K562 (cell line): ENCODE measurements at regions of chr11 and their contacts with region 1.

Region 1: DNA sequence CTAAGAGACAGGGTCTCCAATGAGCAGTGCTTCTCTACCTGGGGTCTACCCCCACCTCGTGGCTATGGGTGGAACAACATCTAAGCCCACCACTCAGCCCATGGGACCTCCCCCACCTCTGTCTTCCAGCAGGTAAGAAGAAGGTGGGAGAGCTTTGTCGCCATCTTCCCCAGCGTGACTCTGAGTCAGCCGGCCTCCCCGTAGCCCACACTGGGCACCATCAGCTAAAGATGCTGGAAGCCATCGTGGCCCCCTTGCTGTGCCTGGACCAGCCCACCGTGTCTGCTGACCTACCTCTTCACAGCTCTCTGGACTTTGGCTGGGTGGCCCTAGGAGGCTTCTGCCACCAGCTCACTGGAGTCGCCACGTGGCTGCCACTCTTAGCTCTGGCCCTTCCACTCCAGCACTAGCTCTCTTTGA is 954 bp downstream of the C11orf86 start:
- DNase-seq: peak; percentile 54 to 79 (median 68)
- ATAC-seq: peak; percentile 85
- H3K4me3 ChIP-seq: no peak overlapping the region
- H3K27ac ChIP-seq: no peak overlapping the region
- H3K4me1 ChIP-seq: peaks cover 0 to 14% of the 10 kb centered on the region in 2 experiments; a peak in 2 of 5 replicates
- H3K27me3 ChIP-seq: no peaks in the 10 kb centered on the region
- CTCF ChIP-seq: peak; percentile 73 to 94 (median 78)
- EP300 ChIP-seq: no peak
- POLR2A ChIP-seq: no peak
- RAD21 ChIP-seq: peak; percentile 81 to 91

Region 2: GRCh38 chr11:66694732-66695207 is 281.3 kb before region 1 on chr11:
- CTCF ChIA-PET with region 1: interaction called, 11 read pairs
- POLR2A ChIA-PET with region 1: no interaction called
- in situ Hi-C with region 1: loop called (anchors 5 kb)
- intact Hi-C with region 1: loop called (anchors 2 kb)
- DNase-seq: peak; percentile 84 to 95 (median 87)
- ATAC-seq: peak; percentile 99
- H3K4me3 ChIP-seq: no peak overlapping the region
- H3K27ac ChIP-seq: no peak overlapping the region; the same call in 2 of the 3 replicates
- H3K4me1 ChIP-seq: peaks cover 0 to 23% of the 10 kb centered on the region in 2 experiments; a peak in 2 of 5 replicates
- H3K27me3 ChIP-seq: no peaks in the 10 kb centered on the region
- CTCF ChIP-seq: peak; percentile 98 to 99 (median 98)
- EP300 ChIP-seq: no peak
- POLR2A ChIP-seq: no peak
- RAD21 ChIP-seq: peak; percentile 98 to 99

Region 3: DNA sequence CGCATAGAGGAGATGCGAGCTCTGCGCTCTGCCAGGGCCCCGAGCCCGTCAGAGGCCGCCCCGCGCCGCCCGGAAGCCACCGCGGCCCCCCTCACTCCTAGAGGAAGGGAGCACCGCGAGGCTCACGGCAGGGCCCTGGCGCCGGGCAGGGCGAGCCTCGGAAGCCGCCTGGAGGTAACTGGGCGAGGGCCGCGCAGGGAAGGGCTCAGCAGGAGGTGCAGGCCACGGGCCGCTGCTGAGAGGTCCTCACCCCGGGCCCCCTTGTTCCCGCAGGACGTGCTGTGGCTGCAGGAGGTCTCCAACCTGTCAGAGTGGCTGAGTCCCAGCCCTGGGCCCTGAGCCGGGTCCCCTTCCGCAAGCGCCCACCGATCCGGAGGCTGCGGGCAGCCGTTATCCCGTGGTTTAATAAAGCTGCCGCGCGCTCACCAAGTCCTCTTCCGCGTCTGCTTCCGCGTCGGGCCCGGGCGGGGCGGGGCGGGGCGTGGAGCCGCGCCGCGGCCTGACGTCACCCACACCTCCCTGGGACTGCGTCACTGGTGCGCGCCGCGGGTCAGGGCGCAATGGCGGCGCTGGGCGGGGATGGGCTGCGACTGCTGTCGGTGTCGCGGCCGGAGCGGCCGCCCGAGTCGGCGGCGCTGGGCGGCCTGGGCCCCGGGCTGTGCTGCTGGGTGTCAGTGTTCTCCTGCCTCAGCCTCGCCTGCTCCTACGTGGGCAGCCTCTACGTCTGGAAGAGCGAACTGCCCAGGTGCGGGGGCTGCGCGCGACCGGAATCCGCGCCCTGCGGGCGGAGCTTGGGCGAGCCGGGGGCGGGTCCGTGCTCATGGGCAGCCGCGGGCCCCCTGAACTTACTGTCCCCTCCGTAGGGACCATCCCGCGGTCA is 132.9 kb before region 1 on chr11 and contains the start of gene RCE1:
- CTCF ChIA-PET with region 1: no interaction called
- POLR2A ChIA-PET with region 1: no interaction called
- in situ Hi-C with region 1: no loop called
- intact Hi-C with region 1: loop called (anchors 5 kb)
- DNase-seq: peak; percentile 93 to 95 (median 94)
- ATAC-seq: peak; percentile 81
- H3K4me3 ChIP-seq: peak within 1 kb of the TSS; percentile 99
- H3K27ac ChIP-seq: peak within 1 kb of the TSS; percentile 98
- H3K4me1 ChIP-seq: peaks cover 44 to 56% of the 10 kb centered on the region in 2 experiments
- H3K27me3 ChIP-seq: no peaks in the 10 kb centered on the region
- CTCF ChIP-seq: 0 out of 6 replicates have a peak, but pooled peaks of 1 of the 3 experiments have one; percentile 0
- EP300 ChIP-seq: no peak; the same call in 1 of the 2 replicates
- POLR2A ChIP-seq: peak; percentile 91
- RAD21 ChIP-seq: no peak; a peak in 1 of 4 replicates
- polyA plus RNA-seq, gene RCE1: 0.75 to 3.0 TPM

Region 4: GRCh38 chr11:66855574-66856495 is 120.2 kb before region 1 on chr11:
- CTCF ChIA-PET with region 1: no interaction called
- POLR2A ChIA-PET with region 1: interaction called, 3 read pairs
- in situ Hi-C with region 1: loop called (anchors 5 kb)
- intact Hi-C with region 1: no loop called
- DNase-seq: peak; percentile 97 to 98 (median 98)
- ATAC-seq: peak; percentile 95
- H3K4me3 ChIP-seq: peak overlapping the region; percentile 68
- H3K27ac ChIP-seq: peak overlapping the region; percentile 98
- H3K4me1 ChIP-seq: peaks cover 11 to 95% of the 10 kb centered on the region in 2 experiments; a peak in 4 of 5 replicates
- H3K27me3 ChIP-seq: no peaks in the 10 kb centered on the region
- CTCF ChIP-seq: 0 out of 6 replicates have a peak, but pooled peaks of 1 of the 3 experiments have one; percentile 3
- EP300 ChIP-seq: peak; percentile 48
- POLR2A ChIP-seq: peak; percentile 95
- RAD21 ChIP-seq: no peak

Region 5: DNA sequence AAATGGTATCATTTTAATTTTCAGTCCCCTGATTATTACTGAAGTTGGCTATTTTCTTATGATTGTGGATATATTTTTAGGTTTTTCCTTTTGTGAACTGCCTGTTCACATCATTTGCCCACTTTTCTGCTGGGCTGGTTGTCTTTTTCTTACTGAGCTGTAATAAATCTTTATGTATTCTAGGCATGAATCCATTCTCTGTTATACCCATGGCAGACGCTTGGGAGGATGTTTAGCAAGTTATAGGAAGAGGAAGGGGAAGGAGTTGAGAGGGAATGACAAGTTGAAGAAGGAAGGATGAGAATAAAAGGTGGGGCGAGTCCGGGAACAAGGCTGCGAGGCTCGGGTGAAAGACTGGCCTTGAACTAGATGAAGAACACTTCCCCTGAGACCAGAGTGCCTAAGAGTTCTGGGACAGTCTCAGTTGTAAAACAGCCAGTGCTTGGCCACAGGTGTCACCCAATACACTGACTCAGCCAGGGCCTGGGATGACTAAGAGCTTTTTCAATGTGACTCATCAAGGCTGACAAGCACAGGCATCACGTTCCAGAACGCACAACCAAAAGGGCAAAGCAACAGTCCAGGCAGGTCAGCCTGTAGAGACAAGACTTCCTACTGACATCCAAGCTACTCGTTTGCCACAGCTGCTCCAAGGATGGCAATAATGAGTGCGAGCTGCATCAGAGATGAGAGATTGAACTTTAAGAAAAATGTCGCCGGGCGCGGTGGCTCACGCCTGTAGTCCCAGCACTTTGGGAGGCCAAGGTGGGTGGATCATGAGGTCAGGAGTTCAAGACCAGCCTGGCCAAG is 84.0 kb before region 1 on chr11:
- CTCF ChIA-PET with region 1: interaction called, 4 read pairs
- POLR2A ChIA-PET with region 1: no interaction called
- in situ Hi-C with region 1: no loop called
- intact Hi-C with region 1: loop called (anchors 5 kb)
- DNase-seq: peak; percentile 85 to 95 (median 88)
- ATAC-seq: peak; percentile 99
- H3K4me3 ChIP-seq: no peak overlapping the region
- H3K27ac ChIP-seq: peak overlapping the region; percentile 82
- H3K4me1 ChIP-seq: peaks cover 16 to 35% of the 10 kb centered on the region in 2 experiments; a peak in 4 of 5 replicates
- H3K27me3 ChIP-seq: no peaks in the 10 kb centered on the region
- CTCF ChIP-seq: peak; percentile 32 to 47 (median 46); a peak in 5 of 6 replicates
- EP300 ChIP-seq: peak; percentile 66
- POLR2A ChIP-seq: peak; percentile 37; the same call in 1 of the 2 replicates
- RAD21 ChIP-seq: peak; percentile 29 to 52; a peak in 3 of 4 replicates